ENCODE measurements at regions of chr3 and their contacts with region 1.

Region 1: GRCh38 chr3:134473868-134474546 is 11.8 kb downstream of the ANAPC13 start:
- DNase-seq: peak; percentile 78 to 82
- H3K4me3 ChIP-seq: no peak overlapping the region
- H3K27ac ChIP-seq: no peak overlapping the region
- H3K4me1 ChIP-seq: peaks cover 0 to 9% (median 4%) of the 10 kb centered on the region in 4 donors
- H3K27me3 ChIP-seq: no peaks in the 10 kb centered on the region
- CTCF ChIP-seq: peak; percentile 76 to 92

Region 2: GRCh38 chr3:134212906-134213665 is 260.9 kb before region 1 on chr3:
- intact Hi-C with region 1: loop called (anchors 5 kb)
- DNase-seq: peak; percentile 81 to 86
- H3K4me3 ChIP-seq: no peak overlapping the region
- H3K27ac ChIP-seq: no peak overlapping the region
- H3K4me1 ChIP-seq: peaks cover 0 to 18% (median 9%) of the 10 kb centered on the region in 4 donors
- H3K27me3 ChIP-seq: no peaks in the 10 kb centered on the region
- CTCF ChIP-seq: peak; percentile 92 to 99

Region 3: DNA sequence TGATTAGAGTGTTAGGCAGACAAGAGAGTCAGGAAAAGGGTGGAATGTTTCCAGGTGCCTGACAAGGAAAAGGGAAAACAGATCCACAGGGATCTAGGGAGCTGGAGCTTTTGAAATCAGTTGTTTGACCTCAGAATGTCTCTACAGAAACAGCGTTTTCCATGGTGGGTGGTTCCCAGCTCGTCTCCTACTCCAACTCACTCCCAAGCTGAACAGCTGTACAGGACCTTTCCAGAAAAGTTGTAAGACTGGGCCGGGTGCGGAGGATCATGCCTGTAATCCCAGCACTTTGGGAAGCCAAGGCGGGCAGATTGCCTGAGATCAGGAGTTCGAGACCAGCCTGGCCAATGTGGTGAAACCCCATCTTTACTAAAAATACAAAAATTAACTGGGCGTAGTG is 167.7 kb before region 1 on chr3:
- intact Hi-C with region 1: loop called (anchors 2 kb)
- DNase-seq: no peak
- H3K4me3 ChIP-seq: no peak overlapping the region
- H3K27ac ChIP-seq: no peak overlapping the region
- H3K4me1 ChIP-seq: peaks cover 0 to 36% (median 24%) of the 10 kb centered on the region in 4 donors
- H3K27me3 ChIP-seq: no peaks in the 10 kb centered on the region
- CTCF ChIP-seq: no peak

Region 4: GRCh38 chr3:134373994-134374790 is 99.8 kb before region 1 on chr3 and contains the start of gene AMOTL2:
- intact Hi-C with region 1: loop called (anchors 5 kb)
- DNase-seq: peak; percentile 83 to 93
- H3K4me3 ChIP-seq: peak within 1 kb of the TSS; percentile 90 to 97
- H3K27ac ChIP-seq: peak within 1 kb of the TSS; percentile 98 to 99
- H3K4me1 ChIP-seq: peaks cover 18 to 48% (median 43%) of the 10 kb centered on the region in 4 donors
- H3K27me3 ChIP-seq: no peaks in the 10 kb centered on the region
- CTCF ChIP-seq: no peak

Measured in tibial artery (tissue), 4 donors.